Posterior vena cava (tissue), 2 donors: ENCODE measurements at regions of chr20 and their contacts with region 1.

Region 1: DNA sequence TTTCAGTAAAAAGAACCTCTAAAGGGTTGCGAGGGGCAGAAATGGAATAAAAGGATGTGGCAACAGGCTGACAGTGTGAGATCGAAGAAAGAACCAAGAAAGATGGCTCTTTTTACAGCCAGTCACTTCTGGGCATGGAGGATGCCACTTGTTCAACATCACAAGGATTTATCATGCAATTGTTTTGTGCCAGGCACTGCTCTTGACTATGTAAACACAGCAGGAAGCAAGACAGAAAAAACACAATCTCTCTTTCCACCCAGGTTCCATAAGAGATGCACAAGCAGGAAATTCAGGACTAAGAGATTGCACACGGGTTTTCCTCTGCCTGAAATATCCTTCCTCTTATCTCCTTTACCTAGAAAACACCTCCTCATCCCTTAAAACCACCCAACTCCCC is 38.0 kb downstream of the FOXA2 start:
- DNase-seq: no peak

Region 2: DNA sequence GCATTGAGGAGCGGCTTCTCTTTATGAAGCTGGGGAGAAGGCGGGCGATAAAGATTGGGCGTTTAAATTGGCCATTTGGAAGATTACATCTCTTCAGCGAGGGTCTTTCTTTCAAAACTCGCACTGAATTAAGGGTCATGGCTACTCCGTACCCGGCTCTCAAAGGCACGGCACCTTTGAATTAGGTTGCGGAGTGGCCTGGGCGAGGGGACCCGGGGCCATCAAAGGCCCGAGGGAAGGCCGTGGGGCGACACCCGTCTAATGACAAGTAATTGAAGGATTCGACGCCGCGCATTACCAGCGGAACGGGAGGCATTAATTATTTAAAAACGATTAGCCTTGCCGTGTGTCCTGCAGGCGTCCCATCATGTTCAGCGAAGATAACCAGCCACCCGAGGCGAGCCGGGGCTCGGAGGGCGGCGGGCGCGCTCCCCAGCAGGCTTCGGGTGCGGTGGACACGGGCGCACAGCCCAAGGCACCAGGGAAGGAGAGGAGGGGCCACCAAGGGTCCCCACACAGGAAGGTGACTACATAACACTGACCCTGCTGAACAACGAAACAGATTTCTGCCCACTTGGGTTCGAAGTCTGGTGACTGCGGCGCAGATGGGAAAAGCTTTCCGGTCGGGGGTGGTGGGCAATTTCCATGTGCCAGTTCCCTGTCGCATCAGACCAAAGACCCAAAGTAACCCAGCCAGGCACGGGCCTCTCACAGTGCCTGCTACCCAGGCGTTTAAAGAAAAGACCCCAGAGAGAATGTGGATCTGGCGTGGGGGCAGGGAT is 30.6 kb after region 1 on chr20:
- intact Hi-C with region 1: loop called in 1 of 2 experiments (anchors 1 kb)
- DNase-seq: no peak